SK-N-SH (cell line): ENCODE measurements at regions of chrX and their contacts with region 1.

Region 1: GRCh38 chrX:130994671-130995070 is 63.5 kb upstream of the ARHGAP36 start:
- DNase-seq: peak; percentile 30
- H3K4me3 ChIP-seq: no peak overlapping the region; a peak in 1 of 4 replicates
- H3K27ac ChIP-seq: peak overlapping the region in 1 of 2 experiments; percentile 62; a peak in 1 of 4 replicates
- H3K4me1 ChIP-seq: peaks cover 0 to 7% of the 10 kb centered on the region in 2 experiments; a peak in 1 of 4 replicates
- H3K27me3 ChIP-seq: peaks cover 8% of the 10 kb centered on the region; the same call in 1 of the 2 replicates
- CTCF ChIP-seq: peak; percentile 87
- EP300 ChIP-seq: no peak
- RAD21 ChIP-seq: peak; percentile 69

Region 2: GRCh38 chrX:131010186-131010585 is 15.5 kb after region 1 on chrX:
- CTCF ChIA-PET with region 1: interaction called, 17 read pairs
- POLR2A ChIA-PET with region 1: no interaction called
- DNase-seq: no peak
- H3K4me3 ChIP-seq: no peak overlapping the region
- H3K27ac ChIP-seq: no peak overlapping the region
- H3K4me1 ChIP-seq: no peaks in the 10 kb centered on the region
- H3K27me3 ChIP-seq: no peaks in the 10 kb centered on the region
- CTCF ChIP-seq: no peak
- EP300 ChIP-seq: no peak
- RAD21 ChIP-seq: no peak

Region 3: GRCh38 chrX:131032354-131033230 is 37.9 kb after region 1 on chrX:
- CTCF ChIA-PET with region 1: interaction called, 12 read pairs
- POLR2A ChIA-PET with region 1: no interaction called
- DNase-seq: no peak
- H3K4me3 ChIP-seq: no peak overlapping the region
- H3K27ac ChIP-seq: peak overlapping the region in 1 of 2 experiments; percentile 96; a peak in 2 of 4 replicates
- H3K4me1 ChIP-seq: peaks cover 0 to 8% of the 10 kb centered on the region in 2 experiments; a peak in 2 of 4 replicates
- H3K27me3 ChIP-seq: peaks cover 21% of the 10 kb centered on the region
- CTCF ChIP-seq: no peak
- EP300 ChIP-seq: peak in 1 of 2 experiments; percentile 89; a peak in 2 of 4 replicates
- RAD21 ChIP-seq: no peak

Region 4: DNA sequence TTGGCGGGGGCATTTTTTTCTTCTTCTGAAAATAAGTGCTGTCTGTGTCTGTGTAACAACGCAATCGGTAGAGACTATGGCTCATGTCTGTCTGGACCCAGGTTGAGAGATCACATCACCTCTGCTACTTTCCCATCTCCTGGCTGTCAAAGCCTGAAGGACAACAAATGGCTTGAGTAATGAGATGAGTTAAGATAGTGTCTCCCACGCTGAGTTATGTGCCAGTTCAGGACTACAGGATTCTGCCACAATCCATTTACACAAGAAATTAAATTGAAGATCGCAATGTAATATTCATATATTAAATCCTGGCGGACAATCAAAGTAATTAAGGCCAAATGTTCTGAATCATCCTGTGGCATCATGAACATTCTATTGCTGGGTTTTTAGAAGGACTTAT is 47.0 kb after region 1 on chrX:
- CTCF ChIA-PET with region 1: interaction called, 12 read pairs
- POLR2A ChIA-PET with region 1: no interaction called
- DNase-seq: peak; percentile 47
- H3K4me3 ChIP-seq: no peak overlapping the region
- H3K27ac ChIP-seq: peak overlapping the region in 1 of 2 experiments; percentile 93; a peak in 3 of 4 replicates
- H3K4me1 ChIP-seq: peaks cover 0 to 19% of the 10 kb centered on the region in 2 experiments; a peak in 1 of 4 replicates
- H3K27me3 ChIP-seq: peaks cover 9% of the 10 kb centered on the region; the same call in 1 of the 2 replicates
- CTCF ChIP-seq: no peak
- EP300 ChIP-seq: peak; percentile 11 to 93; a peak in 3 of 4 replicates
- RAD21 ChIP-seq: no peak

Region 5: DNA sequence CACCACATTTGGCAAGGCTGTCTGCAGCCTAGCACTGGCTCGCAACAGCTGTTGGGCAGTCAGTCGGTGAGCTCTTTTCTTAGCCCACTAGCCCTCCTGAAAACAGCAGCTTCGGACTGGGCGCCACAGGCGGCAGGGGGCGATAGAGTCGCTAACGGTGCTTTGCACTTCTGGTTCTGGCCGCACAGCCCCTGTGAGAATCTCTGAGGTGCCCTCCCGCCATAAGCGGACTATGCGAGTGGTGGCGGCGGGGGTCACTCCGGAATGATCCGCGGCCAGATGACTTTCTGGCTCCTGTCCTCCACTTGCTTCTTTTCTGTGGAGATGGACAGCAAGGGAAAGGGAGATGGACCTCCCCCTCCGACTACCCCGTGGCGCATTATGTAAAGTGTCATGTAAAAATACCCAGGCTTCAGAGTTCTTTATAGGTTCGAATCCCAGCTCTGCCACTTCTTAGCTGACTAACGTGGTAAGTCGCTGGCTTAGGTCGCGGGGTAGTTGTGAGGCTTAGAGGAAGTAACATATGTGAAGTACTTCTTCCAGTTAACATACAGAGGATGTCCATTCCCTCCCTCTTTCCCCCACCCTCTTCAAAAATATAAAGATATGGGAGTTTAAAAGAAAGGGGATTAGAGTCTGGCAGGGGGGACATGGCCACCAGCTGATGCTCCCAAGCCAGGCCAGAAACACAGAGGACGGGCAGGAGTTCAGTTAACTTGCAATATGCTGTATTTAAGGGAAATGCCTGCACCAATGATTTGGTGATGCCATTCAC is 74.5 kb after region 1 on chrX:
- CTCF ChIA-PET with region 1: interaction called, 11 read pairs
- POLR2A ChIA-PET with region 1: no interaction called
- DNase-seq: peak; percentile 82
- H3K4me3 ChIP-seq: peak overlapping the region in 1 of 2 experiments; percentile 29; a peak in 1 of 4 replicates
- H3K27ac ChIP-seq: no peak overlapping the region; a peak in 1 of 4 replicates
- H3K4me1 ChIP-seq: no peaks in the 10 kb centered on the region; a peak in 1 of 4 replicates
- H3K27me3 ChIP-seq: peaks cover 15% of the 10 kb centered on the region; the same call in 1 of the 2 replicates
- CTCF ChIP-seq: peak; percentile 62
- EP300 ChIP-seq: no peak
- RAD21 ChIP-seq: peak; percentile 54

Region 6: DNA sequence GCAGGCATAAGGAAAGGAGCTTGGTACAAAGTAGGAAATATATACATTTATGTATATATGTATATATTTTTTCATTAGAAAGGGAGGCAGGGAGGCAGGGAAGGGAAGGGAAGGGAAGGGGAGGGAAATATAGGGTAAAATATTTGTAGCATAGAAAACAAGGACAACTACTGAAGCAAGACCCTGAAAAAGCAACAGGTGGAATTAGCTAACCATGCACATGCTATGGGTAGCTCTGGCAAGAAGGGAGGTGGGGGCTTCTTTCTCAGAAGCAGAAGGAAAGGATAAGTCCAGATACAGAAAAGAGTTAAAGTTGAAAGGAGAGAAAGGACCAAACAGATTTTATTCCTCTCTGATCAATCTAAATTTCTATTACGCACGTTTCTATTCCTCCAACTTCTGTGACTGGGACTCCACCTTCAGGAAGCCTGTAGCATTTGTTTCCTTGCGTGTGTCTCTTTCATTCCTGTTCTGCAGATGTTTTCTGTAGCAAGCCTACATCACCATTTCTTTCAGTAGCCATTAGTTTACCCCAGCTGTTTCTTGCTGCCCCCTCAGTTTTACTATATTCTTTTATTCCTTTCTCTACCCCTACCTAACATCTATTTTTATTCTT is 632.1 kb after region 1 on chrX:
- CTCF ChIA-PET with region 1: interaction called, 16 read pairs
- POLR2A ChIA-PET with region 1: no interaction called
- DNase-seq: peak; percentile 4
- H3K4me3 ChIP-seq: no peak overlapping the region
- H3K27ac ChIP-seq: no peak overlapping the region
- H3K4me1 ChIP-seq: no peaks in the 10 kb centered on the region
- H3K27me3 ChIP-seq: no peaks in the 10 kb centered on the region
- CTCF ChIP-seq: peak; percentile 62
- EP300 ChIP-seq: no peak
- RAD21 ChIP-seq: peak; percentile 73

Region 7: DNA sequence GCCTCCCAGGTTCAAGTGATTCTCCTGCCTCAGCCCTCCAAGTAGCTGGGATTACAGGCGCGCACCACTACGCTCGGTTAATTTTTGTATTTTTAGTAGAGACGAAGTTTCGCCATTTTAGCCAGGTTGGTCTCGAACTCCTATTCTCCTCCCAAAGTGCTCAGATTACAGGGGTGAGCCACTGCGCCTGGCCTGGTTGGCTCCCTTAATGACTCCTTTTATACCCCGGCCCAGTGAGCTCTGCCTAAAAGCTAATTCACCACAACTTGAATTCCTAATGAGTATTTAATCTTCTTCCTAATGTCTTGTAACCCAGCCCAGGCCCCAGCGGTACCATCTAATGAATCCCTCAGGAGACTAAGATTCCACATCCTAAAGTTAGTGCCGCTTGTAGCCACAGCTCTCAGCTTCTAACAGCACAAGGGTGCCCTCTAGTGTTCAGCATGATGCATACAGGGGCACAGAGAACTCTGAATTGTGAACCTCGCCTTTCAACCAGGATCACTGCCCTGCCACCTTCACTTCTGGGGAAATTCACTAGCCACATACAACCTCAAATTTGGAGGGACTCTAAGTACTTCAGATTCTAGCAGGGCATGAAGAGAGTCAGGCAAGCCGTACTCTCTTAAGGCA is 638.7 kb after region 1 on chrX:
- CTCF ChIA-PET with region 1: interaction called, 16 read pairs
- POLR2A ChIA-PET with region 1: no interaction called
- DNase-seq: peak; percentile 51
- H3K4me3 ChIP-seq: 0 out of 4 replicates have a peak overlapping the region, but pooled peaks of 1 of the 2 experiments have one; percentile 28
- H3K27ac ChIP-seq: no peak overlapping the region
- H3K4me1 ChIP-seq: no peaks in the 10 kb centered on the region
- H3K27me3 ChIP-seq: no peaks in the 10 kb centered on the region
- CTCF ChIP-seq: peak; percentile 94
- EP300 ChIP-seq: no peak
- RAD21 ChIP-seq: peak; percentile 92